ENCODE measurements at regions of chr10 and their contacts with region 1.

Region 1: GRCh38 chr10:98617906-98618520 is 171.3 kb upstream of the HPS1 start:
- DNase-seq: no peak
- ATAC-seq: no peak
- H3K4me3 ChIP-seq: no peak overlapping the region
- H3K27ac ChIP-seq: no peak overlapping the region
- H3K4me1 ChIP-seq: no peaks in the 10 kb centered on the region
- H3K27me3 ChIP-seq: no peaks in the 10 kb centered on the region
- CTCF ChIP-seq: no peak

Region 2: DNA sequence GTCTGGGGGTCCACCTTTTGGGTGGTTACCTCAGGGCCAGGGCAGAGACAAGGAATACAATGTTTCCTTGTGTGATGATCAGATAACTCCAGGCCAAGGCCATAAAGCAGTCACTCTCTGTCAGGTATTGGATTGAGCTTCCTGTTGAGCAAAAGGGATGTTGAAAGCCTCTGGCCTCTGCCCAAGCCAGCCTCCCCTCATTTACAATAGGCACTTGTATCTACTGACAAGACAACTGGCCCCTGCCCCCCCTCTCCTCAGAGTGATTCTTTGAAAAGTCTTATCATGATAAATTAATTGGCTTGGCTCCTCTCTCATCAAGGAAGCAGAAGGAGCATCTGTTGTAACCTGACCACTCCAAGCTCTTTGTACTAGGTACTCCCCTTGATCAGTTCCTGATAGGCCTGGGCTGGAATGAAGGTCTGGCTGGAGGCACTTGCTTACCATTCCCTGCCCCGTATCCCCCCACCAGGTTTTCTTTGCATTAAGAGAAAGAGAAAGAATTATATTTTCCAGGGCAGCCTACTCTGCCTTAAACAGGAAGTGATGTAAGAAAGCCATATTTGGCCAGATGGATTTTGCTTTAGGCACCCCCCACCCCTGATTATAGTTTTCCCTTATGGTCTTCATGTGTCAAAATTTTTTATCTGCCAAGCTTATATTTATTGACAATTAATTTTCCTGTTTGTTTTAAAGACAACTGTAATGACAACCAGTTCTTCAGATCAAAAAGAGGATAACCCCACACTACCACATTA is 129.2 kb before region 1 on chr10:
- CTCF ChIA-PET with region 1: no interaction called
- POLR2A ChIA-PET with region 1: no interaction called
- in situ Hi-C with region 1: no loop called
- intact Hi-C with region 1: no loop called
- DNase-seq: no peak
- ATAC-seq: no peak
- H3K4me3 ChIP-seq: no peak overlapping the region
- H3K27ac ChIP-seq: no peak overlapping the region
- H3K4me1 ChIP-seq: no peaks in the 10 kb centered on the region
- H3K27me3 ChIP-seq: no peaks in the 10 kb centered on the region; the same call in none of the 2 replicates
- CTCF ChIP-seq: no peak

Region 3: GRCh38 chr10:98555021-98555619 is 62.9 kb before region 1 on chr10:
- CTCF ChIA-PET with region 1: no interaction called
- POLR2A ChIA-PET with region 1: no interaction called
- in situ Hi-C with region 1: no loop called
- intact Hi-C with region 1: loop called (anchors 2 kb)
- DNase-seq: no peak
- ATAC-seq: no peak
- H3K4me3 ChIP-seq: no peak overlapping the region
- H3K27ac ChIP-seq: no peak overlapping the region
- H3K4me1 ChIP-seq: no peaks in the 10 kb centered on the region
- H3K27me3 ChIP-seq: peaks cover 15% of the 10 kb centered on the region
- CTCF ChIP-seq: no peak

Region 4: DNA sequence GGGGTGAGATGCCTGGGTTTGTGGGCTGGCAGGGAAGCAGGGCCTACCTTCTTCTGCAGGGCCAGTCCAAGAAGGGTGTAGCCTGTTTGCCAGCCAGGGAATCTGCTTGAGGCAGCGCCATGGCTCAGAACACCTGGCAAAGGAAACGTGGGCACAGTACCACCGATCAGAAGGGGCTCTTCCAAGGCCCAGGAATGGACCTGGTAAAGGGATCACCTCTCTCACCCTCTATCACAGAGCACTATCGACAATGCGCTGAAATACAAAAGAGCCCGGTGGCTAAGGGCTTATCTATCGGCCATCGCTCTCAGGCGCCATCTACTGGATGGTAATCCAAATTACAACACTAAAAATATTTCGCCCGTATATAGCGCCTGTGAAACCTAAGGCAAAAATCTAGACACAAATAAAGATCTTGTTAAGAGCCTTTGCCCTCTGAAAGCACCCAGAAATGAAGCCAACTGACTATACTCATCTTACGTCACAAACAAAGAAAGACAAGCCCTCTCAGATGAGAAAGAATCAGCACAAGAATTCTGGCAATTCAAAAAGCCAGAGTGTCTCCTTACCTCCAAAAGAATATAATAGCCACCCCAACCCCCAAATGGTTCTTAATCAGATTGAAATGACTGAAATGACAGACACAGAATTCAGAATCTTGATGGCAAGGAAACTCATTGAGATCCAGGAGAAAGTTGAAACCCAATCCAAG is 46.5 kb after region 1 on chr10:
- CTCF ChIA-PET with region 1: no interaction called
- POLR2A ChIA-PET with region 1: no interaction called
- in situ Hi-C with region 1: no loop called
- intact Hi-C with region 1: no loop called
- DNase-seq: peak; percentile 15
- ATAC-seq: peak; percentile 82
- H3K4me3 ChIP-seq: no peak overlapping the region
- H3K27ac ChIP-seq: no peak overlapping the region
- H3K4me1 ChIP-seq: no peaks in the 10 kb centered on the region
- H3K27me3 ChIP-seq: no peaks in the 10 kb centered on the region
- CTCF ChIP-seq: peak; percentile 91

Region 5: GRCh38 chr10:98924526-98924925 is 306.5 kb after region 1 on chr10:
- CTCF ChIA-PET with region 1: no interaction called
- POLR2A ChIA-PET with region 1: no interaction called
- in situ Hi-C with region 1: no loop called
- intact Hi-C with region 1: no loop called
- DNase-seq: no peak
- ATAC-seq: no peak
- H3K4me3 ChIP-seq: no peak overlapping the region
- H3K27ac ChIP-seq: no peak overlapping the region
- H3K4me1 ChIP-seq: no peaks in the 10 kb centered on the region
- H3K27me3 ChIP-seq: 0 out of 2 replicates have a peak, but pooled peaks cover 2% of the 10 kb centered on the region
- CTCF ChIP-seq: no peak